ENCODE measurements at regions of chr20 and their contacts with region 1.

Region 1: DNA sequence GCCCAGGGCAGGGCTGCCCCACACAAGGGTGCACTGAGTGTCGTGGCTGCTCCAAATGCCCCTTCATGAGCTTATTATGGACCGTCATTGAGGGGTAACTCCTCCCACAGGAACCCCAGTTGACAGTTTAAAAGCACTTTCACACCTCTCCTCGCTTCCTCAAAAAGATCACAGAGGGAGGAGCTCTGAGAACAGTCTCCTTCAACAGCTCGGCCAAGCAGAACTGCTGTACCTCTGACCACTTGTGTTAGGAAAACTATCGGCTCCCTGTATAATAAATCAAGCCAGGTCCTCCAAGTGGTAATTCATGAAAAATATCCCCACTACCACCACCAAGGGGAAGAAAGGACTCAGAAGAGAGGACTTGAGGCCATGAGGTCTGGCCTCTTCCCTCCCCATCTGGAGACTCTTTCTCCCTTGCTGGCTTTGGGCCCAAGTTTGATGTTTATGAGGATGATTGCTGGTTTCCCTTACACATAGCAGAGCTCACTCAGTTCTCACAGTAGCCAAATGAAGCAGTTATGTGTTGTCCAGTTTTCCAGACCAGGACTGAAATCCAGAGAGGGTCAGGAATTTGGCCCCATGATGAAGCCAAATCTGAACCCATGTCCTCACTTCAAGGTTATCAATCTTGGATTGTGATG is 8.7 kb downstream of the SNX21 start:
- DNase-seq: no peak
- H3K4me3 ChIP-seq: no peak overlapping the region
- H3K27ac ChIP-seq: no peak overlapping the region
- H3K4me1 ChIP-seq: no peaks in the 10 kb centered on the region
- H3K27me3 ChIP-seq: no peaks in the 10 kb centered on the region
- CTCF ChIP-seq: no peak
- EP300 ChIP-seq: no peak
- POLR2A ChIP-seq: no peak
- RAD21 ChIP-seq: no peak

Region 2: GRCh38 chr20:45817652-45818194 is 24.6 kb before region 1 on chr20:
- CTCF ChIA-PET with region 1: interaction called, 3 read pairs
- POLR2A ChIA-PET with region 1: interaction called, 58 read pairs
- DNase-seq: no peak
- H3K4me3 ChIP-seq: no peak overlapping the region
- H3K27ac ChIP-seq: no peak overlapping the region
- H3K4me1 ChIP-seq: peaks cover 0 to 4% (median 2%) of the 10 kb centered on the region in 4 experiments; a peak in 3 of 7 replicates
- H3K27me3 ChIP-seq: no peaks in the 10 kb centered on the region
- CTCF ChIP-seq: no peak
- EP300 ChIP-seq: no peak
- POLR2A ChIP-seq: no peak
- RAD21 ChIP-seq: no peak

Region 3: GRCh38 chr20:45902199-45902701 is 60.0 kb after region 1 on chr20:
- CTCF ChIA-PET with region 1: no interaction called
- POLR2A ChIA-PET with region 1: no interaction called
- DNase-seq: no peak
- H3K4me3 ChIP-seq: no peak overlapping the region
- H3K27ac ChIP-seq: no peak overlapping the region
- H3K4me1 ChIP-seq: no peaks in the 10 kb centered on the region
- H3K27me3 ChIP-seq: no peaks in the 10 kb centered on the region
- CTCF ChIP-seq: no peak
- EP300 ChIP-seq: no peak
- POLR2A ChIP-seq: no peak
- RAD21 ChIP-seq: no peak

Measured in H1 (cell line).